Activated naive CD4-positive, alpha-beta T cell treated with anti-CD3 and anti-CD28 coated beads for 36 hours (primary cell): ENCODE measurements at regions of chr6 and their contacts with region 1.

Region 1: GRCh38 chr6:169212897-169213813 is 40.5 kb downstream of the THBS2 start:
- DNase-seq: peak; percentile 93
- H3K4me3 Mint-ChIP-seq: peak overlapping the region; percentile 61
- H3K27ac Mint-ChIP-seq: peak overlapping the region; percentile 79
- H3K4me1 Mint-ChIP-seq: peaks cover 8% of the 10 kb centered on the region
- H3K27me3 Mint-ChIP-seq: no peaks in the 10 kb centered on the region

Region 2: GRCh38 chr6:169131390-169131789 is 81.8 kb before region 1 on chr6:
- CTCF ChIA-PET with region 1: no interaction called
- intact Hi-C with region 1: no loop called
- DNase-seq: no peak
- H3K4me3 Mint-ChIP-seq: no peak overlapping the region
- H3K27ac Mint-ChIP-seq: no peak overlapping the region
- H3K4me1 Mint-ChIP-seq: no peaks in the 10 kb centered on the region
- H3K27me3 Mint-ChIP-seq: peaks cover 10% of the 10 kb centered on the region

Region 3: DNA sequence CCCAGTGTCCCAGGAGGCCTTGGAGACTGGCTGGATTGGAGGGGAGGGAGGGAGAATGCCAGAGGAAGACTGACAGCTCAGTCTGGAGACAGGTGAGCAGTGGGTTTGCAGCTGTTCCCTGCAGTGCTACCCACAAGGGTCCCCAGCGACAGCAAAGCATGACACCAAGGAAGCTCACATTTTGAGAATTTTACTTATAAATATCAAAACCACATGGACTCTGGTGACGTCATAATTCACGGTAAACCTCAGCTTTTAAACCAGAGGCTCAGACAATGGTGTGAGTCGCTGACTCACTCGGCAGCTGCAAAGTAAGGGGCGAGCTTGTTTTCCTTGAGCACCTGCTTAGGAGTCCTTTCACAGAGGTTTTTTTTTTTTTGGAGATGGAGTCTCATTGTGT is 24.7 kb before region 1 on chr6:
- CTCF ChIA-PET with region 1: interaction called, 5 read pairs
- intact Hi-C with region 1: loop called (anchors 1 kb)
- DNase-seq: peak; percentile 28
- H3K4me3 Mint-ChIP-seq: no peak overlapping the region
- H3K27ac Mint-ChIP-seq: no peak overlapping the region
- H3K4me1 Mint-ChIP-seq: peaks cover 3% of the 10 kb centered on the region
- H3K27me3 Mint-ChIP-seq: peaks cover 3% of the 10 kb centered on the region

Region 4: GRCh38 chr6:169487579-169488436 is 274.7 kb after region 1 on chr6:
- CTCF ChIA-PET with region 1: no interaction called
- intact Hi-C with region 1: no loop called
- DNase-seq: no peak
- H3K4me3 Mint-ChIP-seq: no peak overlapping the region
- H3K27ac Mint-ChIP-seq: no peak overlapping the region
- H3K4me1 Mint-ChIP-seq: no peaks in the 10 kb centered on the region
- H3K27me3 Mint-ChIP-seq: no peaks in the 10 kb centered on the region

Region 5: GRCh38 chr6:169654598-169655391 is 441.6 kb after region 1 on chr6:
- CTCF ChIA-PET with region 1: no interaction called
- intact Hi-C with region 1: loop called (anchors 1 kb)
- DNase-seq: peak; percentile 68
- H3K4me3 Mint-ChIP-seq: peak overlapping the region; percentile 79
- H3K27ac Mint-ChIP-seq: peak overlapping the region; percentile 25
- H3K4me1 Mint-ChIP-seq: peaks cover 3% of the 10 kb centered on the region
- H3K27me3 Mint-ChIP-seq: no peaks in the 10 kb centered on the region